Activated CD4-positive, alpha-beta memory T cell treated with anti-CD3 and anti-CD28 coated beads for 36 hours (primary cell): ENCODE measurements at regions of chr3 and their contacts with region 1.

Region 1: GRCh38 chr3:56942523-56942922 is 117.9 kb upstream of the SPATA12 start:
- DNase-seq: no peak
- H3K4me3 Mint-ChIP-seq: no peak overlapping the region
- H3K27ac Mint-ChIP-seq: peak overlapping the region; percentile 47
- H3K4me1 Mint-ChIP-seq: peaks cover 30% of the 10 kb centered on the region
- H3K27me3 Mint-ChIP-seq: no peaks in the 10 kb centered on the region

Region 2: DNA sequence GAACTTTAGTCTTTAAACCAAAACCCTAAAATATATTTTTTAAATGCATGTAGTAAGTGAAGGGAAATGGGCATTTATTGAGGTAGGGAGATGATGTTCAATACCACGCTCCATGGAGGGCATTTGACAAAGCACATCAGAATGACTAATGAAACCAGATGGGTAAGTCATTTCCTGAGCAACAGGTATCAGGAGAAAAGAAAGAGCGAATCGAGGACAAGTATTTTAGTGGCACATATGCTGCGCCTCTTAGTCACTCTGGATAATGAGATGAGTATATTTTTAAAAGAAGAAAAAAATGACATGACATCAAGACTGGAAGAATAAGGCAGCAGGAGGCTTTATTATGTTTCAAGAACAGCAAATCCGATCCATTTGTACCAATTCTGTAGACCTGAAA is 11.8 kb before region 1 on chr3:
- CTCF ChIA-PET with region 1: no interaction called
- POLR2A ChIA-PET with region 1: no interaction called
- intact Hi-C with region 1: loop called (anchors 1 kb)
- DNase-seq: peak; percentile 34
- H3K4me3 Mint-ChIP-seq: peak overlapping the region; percentile 16
- H3K27ac Mint-ChIP-seq: peak overlapping the region; percentile 74
- H3K4me1 Mint-ChIP-seq: peaks cover 71% of the 10 kb centered on the region
- H3K27me3 Mint-ChIP-seq: no peaks in the 10 kb centered on the region

Region 3: GRCh38 chr3:57060089-57060829 is 117.7 kb after region 1 on chr3 and contains the start of gene SPATA12:
- CTCF ChIA-PET with region 1: no interaction called
- POLR2A ChIA-PET with region 1: no interaction called
- intact Hi-C with region 1: no loop called
- DNase-seq: peak; percentile 10
- H3K4me3 Mint-ChIP-seq: no peak within 1 kb of the TSS
- H3K27ac Mint-ChIP-seq: no peak within 1 kb of the TSS
- H3K4me1 Mint-ChIP-seq: no peaks in the 10 kb centered on the region
- H3K27me3 Mint-ChIP-seq: peaks cover 8% of the 10 kb centered on the region
- total RNA-seq, gene SPATA12: not detected